HepG2 (cell line): ENCODE measurements at regions of chr15 and their contacts with region 1.

Region 1: GRCh38 chr15:74460871-74461846 is at the start of gene UBL7:
- DNase-seq: peak; percentile 98
- ATAC-seq: peak; percentile 96
- H3K4me3 ChIP-seq: peak within 1 kb of the TSS; percentile 81 to 88 (median 86)
- H3K27ac ChIP-seq: peak within 1 kb of the TSS; percentile 97
- H3K4me1 ChIP-seq: peaks cover 43% of the 10 kb centered on the region
- H3K27me3 ChIP-seq: no peaks in the 10 kb centered on the region
- CTCF ChIP-seq: peak; percentile 89
- EP300 ChIP-seq: 0 out of 4 replicates have a peak, but pooled peaks of 1 of the 2 experiments have one; percentile 57
- POLR2A ChIP-seq: peak; percentile 91
- RAD21 ChIP-seq: peak; percentile 88
- total RNA-seq, gene UBL7: 55.0 and 63.2 TPM in 2 replicates

Region 2: GRCh38 chr15:74336108-74337002 is 124.8 kb before region 1 on chr15:
- CTCF ChIA-PET with region 1: no interaction called
- POLR2A ChIA-PET with region 1: no interaction called
- in situ Hi-C with region 1: no loop called
- intact Hi-C with region 1: no loop called
- DNase-seq: no peak
- ATAC-seq: no peak
- H3K4me3 ChIP-seq: no peak overlapping the region
- H3K27ac ChIP-seq: no peak overlapping the region
- H3K4me1 ChIP-seq: no peaks in the 10 kb centered on the region
- H3K27me3 ChIP-seq: peaks cover 2 to 50% of the 10 kb centered on the region in 2 experiments; a peak in 3 of 5 replicates
- CTCF ChIP-seq: no peak
- EP300 ChIP-seq: no peak
- POLR2A ChIP-seq: no peak
- RAD21 ChIP-seq: no peak

Region 3: DNA sequence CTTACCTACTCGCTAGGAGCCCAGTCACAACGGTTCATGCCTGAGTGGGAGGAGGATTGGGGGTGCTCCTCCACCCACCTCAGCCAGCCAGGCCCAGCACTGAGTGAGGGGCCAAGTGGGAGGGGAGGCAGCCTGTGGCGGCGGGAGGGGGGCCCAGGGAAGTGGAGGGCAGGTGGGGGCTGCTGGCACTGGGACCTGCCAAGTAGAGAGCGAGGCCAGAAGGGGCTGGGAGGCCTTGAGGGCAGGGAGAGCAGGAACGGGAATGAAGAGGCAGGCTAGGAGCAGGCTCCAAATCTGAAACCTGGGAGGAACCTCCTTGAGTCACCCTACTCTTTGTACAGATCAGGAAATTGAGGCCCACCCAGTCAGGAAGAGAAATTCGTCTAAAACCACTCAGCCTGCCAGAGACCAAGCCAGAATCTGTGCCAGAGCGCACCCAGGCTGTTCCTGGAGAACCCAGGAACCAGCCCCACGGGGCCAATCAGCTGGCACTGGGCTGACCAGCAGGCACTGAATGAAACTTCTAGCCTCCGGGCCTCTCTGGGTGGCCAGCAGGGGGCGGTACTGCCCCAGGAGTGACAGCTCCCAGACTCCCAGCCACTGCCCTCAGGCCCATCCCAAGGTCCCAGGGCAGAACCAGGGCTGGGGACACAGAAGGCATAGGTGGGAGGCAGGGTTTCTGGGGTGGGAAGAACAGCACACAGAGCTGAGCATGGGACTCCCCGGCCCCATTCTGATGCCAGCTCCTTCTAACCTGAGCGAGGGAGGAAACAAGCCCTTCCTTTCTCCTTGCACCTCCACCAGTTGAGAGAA is 78.9 kb before region 1 on chr15:
- CTCF ChIA-PET with region 1: interaction called, 4 read pairs
- POLR2A ChIA-PET with region 1: interaction called, 11 read pairs
- in situ Hi-C with region 1: no loop called
- intact Hi-C with region 1: loop called (anchors 2 kb)
- DNase-seq: peak; percentile 74
- ATAC-seq: peak; percentile 92
- H3K4me3 ChIP-seq: peak overlapping the region in 2 of 3 experiments; percentile 26 to 53; a peak in 2 of 6 replicates
- H3K27ac ChIP-seq: no peak overlapping the region
- H3K4me1 ChIP-seq: peaks cover 66% of the 10 kb centered on the region
- H3K27me3 ChIP-seq: peaks cover 0 to 19% of the 10 kb centered on the region in 2 experiments; a peak in 3 of 5 replicates
- CTCF ChIP-seq: peak; percentile 98
- EP300 ChIP-seq: no peak
- POLR2A ChIP-seq: no peak
- RAD21 ChIP-seq: peak; percentile 99

Region 4: GRCh38 chr15:74422650-74423430 is 38.3 kb before region 1 on chr15:
- CTCF ChIA-PET with region 1: no interaction called
- POLR2A ChIA-PET with region 1: interaction called, 10 read pairs
- in situ Hi-C with region 1: no loop called
- intact Hi-C with region 1: no loop called
- DNase-seq: peak; percentile 82
- ATAC-seq: peak; percentile 68
- H3K4me3 ChIP-seq: peak overlapping the region in 1 of 3 experiments; percentile 30; a peak in 2 of 6 replicates
- H3K27ac ChIP-seq: peak overlapping the region; percentile 74
- H3K4me1 ChIP-seq: peaks cover 98% of the 10 kb centered on the region
- H3K27me3 ChIP-seq: no peaks in the 10 kb centered on the region
- CTCF ChIP-seq: 0 out of 2 replicates have a peak, but pooled peaks have one; percentile 9
- EP300 ChIP-seq: peak in 1 of 2 experiments; percentile 23; a peak in 1 of 4 replicates
- POLR2A ChIP-seq: no peak
- RAD21 ChIP-seq: no peak; the same call in 1 of the 2 replicates

Region 5: DNA sequence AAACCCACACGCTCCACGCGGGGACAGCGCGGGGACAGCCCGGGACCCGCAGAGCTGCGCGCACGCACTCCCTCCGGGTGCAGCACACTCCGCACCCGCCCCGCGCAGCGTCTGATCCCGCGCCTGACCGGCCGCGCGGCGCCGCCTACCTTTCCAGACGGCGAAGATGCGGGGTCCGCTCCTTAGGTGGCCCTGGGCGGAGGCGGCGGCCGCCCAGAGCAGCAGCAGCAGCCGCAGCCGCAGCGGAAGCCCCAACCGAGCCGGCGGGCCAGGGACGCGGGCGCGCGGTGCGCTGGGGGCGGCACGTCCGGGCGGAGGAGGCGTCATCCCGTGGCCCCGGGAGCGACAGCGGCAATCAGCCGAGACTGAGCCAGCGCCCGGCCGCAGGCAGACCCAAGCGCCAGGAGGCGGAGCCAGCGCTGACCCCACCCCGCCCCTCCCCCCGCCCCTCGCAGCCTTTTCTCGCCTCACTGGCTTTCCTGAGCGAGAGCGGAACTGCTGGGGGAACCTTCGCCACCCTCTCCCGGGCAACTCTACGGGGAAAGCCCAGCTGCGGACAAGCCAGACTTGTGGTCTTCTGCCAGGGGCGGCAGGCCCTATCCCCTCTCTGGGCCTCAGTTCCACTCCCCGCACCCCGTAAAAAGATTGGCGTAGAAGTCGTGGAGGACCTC is 27.4 kb before region 1 on chr15 and contains the start of gene SEMA7A:
- CTCF ChIA-PET with region 1: interaction called, 4 read pairs
- POLR2A ChIA-PET with region 1: interaction called, 357 read pairs
- in situ Hi-C with region 1: no loop called
- intact Hi-C with region 1: no loop called
- DNase-seq: peak; percentile 64
- ATAC-seq: peak; percentile 82
- H3K4me3 ChIP-seq: peak within 1 kb of the TSS; percentile 80 to 95 (median 87)
- H3K27ac ChIP-seq: peak within 1 kb of the TSS; percentile 66
- H3K4me1 ChIP-seq: peaks cover 67% of the 10 kb centered on the region
- H3K27me3 ChIP-seq: no peaks in the 10 kb centered on the region
- CTCF ChIP-seq: peak; percentile 10; the same call in 1 of the 2 replicates
- EP300 ChIP-seq: no peak
- POLR2A ChIP-seq: peak; percentile 78 to 96
- RAD21 ChIP-seq: peak; percentile 47
- total RNA-seq, gene SEMA7A: 7.1 and 15.8 TPM in 2 replicates

Region 6: GRCh38 chr15:74449643-74450205 is 11.4 kb before region 1 on chr15:
- CTCF ChIA-PET with region 1: no interaction called
- POLR2A ChIA-PET with region 1: interaction called, 357 read pairs
- in situ Hi-C with region 1: no loop called
- intact Hi-C with region 1: no loop called
- DNase-seq: no peak
- ATAC-seq: no peak
- H3K4me3 ChIP-seq: no peak overlapping the region
- H3K27ac ChIP-seq: no peak overlapping the region
- H3K4me1 ChIP-seq: peaks cover 46% of the 10 kb centered on the region
- H3K27me3 ChIP-seq: no peaks in the 10 kb centered on the region
- CTCF ChIP-seq: no peak
- EP300 ChIP-seq: no peak
- POLR2A ChIP-seq: no peak
- RAD21 ChIP-seq: no peak